Endothelial cell of umbilical vein (primary cell): ENCODE measurements at regions of chr7 and their contacts with region 1.

Region 1: GRCh38 chr7:151244196-151244840 is 4.2 kb downstream of the SMARCD3 start:
- DNase-seq: peak; percentile 61
- H3K4me3 ChIP-seq: no peak overlapping the region
- H3K27ac ChIP-seq: no peak overlapping the region
- H3K4me1 ChIP-seq: peaks cover 15% of the 10 kb centered on the region
- H3K27me3 ChIP-seq: peaks cover 0 to 6% of the 10 kb centered on the region in 2 experiments
- CTCF ChIP-seq: peak; percentile 87 to 94
- POLR2A ChIP-seq: no peak

Region 2: DNA sequence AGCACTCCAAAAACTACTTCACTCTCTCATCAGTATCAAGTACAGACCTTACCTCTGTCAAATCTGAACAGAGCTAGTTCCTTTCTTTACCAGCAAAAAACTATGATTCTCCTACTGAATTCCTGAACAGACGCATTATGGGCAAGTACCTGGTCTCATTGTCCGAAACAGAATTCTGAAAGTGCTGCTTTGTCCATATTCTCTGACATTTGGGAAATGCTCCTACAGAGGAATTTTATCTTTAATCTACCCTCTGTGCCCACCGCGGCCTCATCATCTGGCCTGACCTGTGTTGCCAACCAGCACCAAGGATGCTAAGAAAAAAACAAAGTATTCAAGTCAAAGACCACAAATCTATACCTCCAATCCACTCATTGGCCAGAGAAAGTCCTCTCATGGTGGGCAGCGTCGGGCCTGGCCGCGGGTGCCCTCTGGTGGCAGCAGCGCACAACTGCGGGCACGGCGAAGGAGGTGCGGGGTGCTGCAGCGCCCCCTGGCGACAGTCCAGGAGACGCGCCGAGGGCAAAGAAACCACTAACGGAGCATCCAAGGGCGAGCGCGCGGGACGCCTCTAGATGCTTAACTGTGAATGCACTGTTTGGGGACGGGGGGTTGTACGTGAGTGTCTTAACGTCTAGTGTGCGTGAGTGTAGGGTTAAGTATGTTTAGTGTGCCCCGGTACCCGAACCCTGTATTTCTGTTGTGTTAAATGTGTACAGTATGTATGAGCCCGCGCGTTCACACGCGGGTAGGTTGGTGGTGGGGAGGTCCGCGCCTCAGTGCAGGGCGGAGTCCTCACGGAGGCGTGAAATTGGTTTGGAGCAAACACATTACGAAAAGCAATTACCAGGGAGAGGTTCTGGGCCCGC is 71.8 kb before region 1 on chr7:
- CTCF ChIA-PET with region 1: interaction called, 5 read pairs
- POLR2A ChIA-PET with region 1: no interaction called
- dilution Hi-C with region 1: no loop called
- intact Hi-C with region 1: loop called (anchors 1 kb)
- DNase-seq: peak; percentile 76
- H3K4me3 ChIP-seq: no peak overlapping the region
- H3K27ac ChIP-seq: no peak overlapping the region
- H3K4me1 ChIP-seq: peaks cover 3% of the 10 kb centered on the region
- H3K27me3 ChIP-seq: peaks cover 21 to 26% of the 10 kb centered on the region in 2 experiments
- CTCF ChIP-seq: peak; percentile 100
- POLR2A ChIP-seq: no peak

Region 3: GRCh38 chr7:151226875-151227782 is 17.2 kb before region 1 on chr7 and contains the start of gene ABCF2:
- CTCF ChIA-PET with region 1: interaction called, 58 read pairs
- POLR2A ChIA-PET with region 1: interaction called, 3 read pairs
- dilution Hi-C with region 1: no loop called
- intact Hi-C with region 1: loop called (anchors 2 kb)
- DNase-seq: peak; percentile 99
- H3K4me3 ChIP-seq: peak within 1 kb of the TSS; percentile 64 to 98 (median 82)
- H3K27ac ChIP-seq: peak within 1 kb of the TSS; percentile 16
- H3K4me1 ChIP-seq: peaks cover 22% of the 10 kb centered on the region
- H3K27me3 ChIP-seq: no peaks in the 10 kb centered on the region
- CTCF ChIP-seq: no peak
- POLR2A ChIP-seq: peak; percentile 1
- total RNA-seq, gene ABCF2: 56.7 and 61.6 TPM in 2 replicates

Region 4: DNA sequence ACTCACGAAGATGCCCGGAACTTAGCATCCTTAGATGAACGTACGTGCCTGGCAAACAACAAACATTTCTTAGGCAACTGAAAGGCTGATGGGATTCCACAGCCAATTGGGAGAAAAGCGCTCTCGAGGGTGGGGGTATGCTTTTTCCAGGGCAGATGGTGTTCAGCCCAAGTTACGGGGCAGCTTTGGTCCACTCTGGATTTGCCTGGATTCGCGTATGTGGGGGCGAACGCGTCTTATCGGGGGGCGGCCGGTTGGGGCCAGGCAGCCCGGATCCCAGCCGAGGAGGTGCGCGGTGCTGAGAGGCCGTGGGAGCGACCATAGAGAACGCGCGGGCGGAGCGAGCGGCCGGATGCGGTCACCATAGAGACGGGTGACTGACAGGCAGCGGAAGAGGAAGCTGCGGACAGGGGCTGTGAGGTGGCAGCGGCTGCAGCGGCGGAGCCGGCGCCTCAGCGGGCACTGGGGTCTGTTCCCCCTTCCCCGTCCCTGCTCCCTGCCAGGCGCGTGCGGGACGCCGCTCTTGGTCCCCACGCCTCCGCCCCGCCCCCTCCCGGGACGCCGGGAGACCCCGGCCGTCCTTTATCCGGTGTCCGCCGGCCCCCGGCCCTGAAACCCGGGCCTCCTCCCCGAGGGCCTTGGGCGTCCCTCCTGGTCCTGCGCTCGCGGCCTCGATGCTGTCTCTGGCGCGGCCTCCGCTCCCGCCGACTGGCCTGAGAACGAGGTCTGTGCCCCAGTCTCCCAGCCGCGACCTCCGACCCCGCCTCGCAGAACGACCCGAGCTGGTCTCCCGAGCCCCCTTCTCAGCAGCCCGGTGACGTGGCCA is 12.0 kb before region 1 on chr7 and contains the start of gene CHPF2:
- CTCF ChIA-PET with region 1: interaction called, 58 read pairs
- POLR2A ChIA-PET with region 1: interaction called, 3 read pairs
- dilution Hi-C with region 1: no loop called
- intact Hi-C with region 1: loop called (anchors 1 kb)
- DNase-seq: peak; percentile 88
- H3K4me3 ChIP-seq: peak within 1 kb of the TSS; percentile 82 to 95 (median 83)
- H3K27ac ChIP-seq: peak within 1 kb of the TSS; percentile 88
- H3K4me1 ChIP-seq: peaks cover 19% of the 10 kb centered on the region
- H3K27me3 ChIP-seq: no peaks in the 10 kb centered on the region
- CTCF ChIP-seq: no peak
- POLR2A ChIP-seq: peak; percentile 95
- total RNA-seq, gene CHPF2: 73.0 and 75.0 TPM in 2 replicates

Region 5: DNA sequence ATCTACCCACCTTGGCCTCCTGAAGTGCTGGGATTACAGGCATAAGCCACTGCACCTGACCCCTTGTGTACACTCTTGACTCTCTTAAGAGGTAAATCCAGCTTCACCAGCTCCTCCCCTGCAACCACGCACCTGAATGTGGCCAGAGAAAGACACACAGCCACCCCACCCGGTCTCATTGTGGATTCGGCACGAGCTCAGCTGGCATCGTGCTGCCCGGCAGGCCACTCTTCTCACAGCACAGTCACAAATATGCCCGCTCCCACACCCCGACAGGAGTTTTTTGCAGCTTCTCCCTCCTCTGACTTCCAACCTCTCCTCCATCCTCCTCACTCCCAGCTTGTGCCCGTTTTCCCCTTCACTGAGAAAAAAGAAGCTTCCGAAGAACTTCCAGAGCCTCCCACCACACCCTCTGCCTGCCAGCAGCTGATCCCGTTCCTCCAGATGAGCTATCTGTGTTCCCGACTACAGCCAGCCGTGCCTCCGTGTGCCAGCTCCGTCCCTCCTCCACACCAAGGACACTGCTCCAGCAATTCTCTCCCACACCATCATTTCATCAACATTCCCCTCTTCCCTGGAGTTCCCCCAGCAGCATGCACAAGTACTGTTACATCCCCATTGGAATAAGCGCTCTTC is 12.2 kb after region 1 on chr7:
- CTCF ChIA-PET with region 1: interaction called, 17 read pairs
- POLR2A ChIA-PET with region 1: no interaction called
- dilution Hi-C with region 1: no loop called
- intact Hi-C with region 1: no loop called
- DNase-seq: no peak
- H3K4me3 ChIP-seq: no peak overlapping the region
- H3K27ac ChIP-seq: no peak overlapping the region
- H3K4me1 ChIP-seq: no peaks in the 10 kb centered on the region
- H3K27me3 ChIP-seq: peaks cover 9 to 10% of the 10 kb centered on the region in 2 experiments
- CTCF ChIP-seq: no peak
- POLR2A ChIP-seq: no peak

Region 6: GRCh38 chr7:151304856-151305255 is 60.5 kb after region 1 on chr7:
- CTCF ChIA-PET with region 1: interaction called, 18 read pairs
- POLR2A ChIA-PET with region 1: no interaction called
- dilution Hi-C with region 1: no loop called
- intact Hi-C with region 1: loop called (anchors 1 kb)
- DNase-seq: no peak
- H3K4me3 ChIP-seq: peak overlapping the region in 1 of 3 experiments; percentile 20
- H3K27ac ChIP-seq: no peak overlapping the region
- H3K4me1 ChIP-seq: peaks cover 3% of the 10 kb centered on the region
- H3K27me3 ChIP-seq: peaks cover 10 to 17% of the 10 kb centered on the region in 2 experiments
- CTCF ChIP-seq: no peak
- POLR2A ChIP-seq: no peak

Region 7: GRCh38 chr7:151529842-151530241 is 285.5 kb after region 1 on chr7:
- CTCF ChIA-PET with region 1: no interaction called
- POLR2A ChIA-PET with region 1: no interaction called
- dilution Hi-C with region 1: no loop called
- intact Hi-C with region 1: no loop called
- DNase-seq: no peak
- H3K4me3 ChIP-seq: no peak overlapping the region
- H3K27ac ChIP-seq: no peak overlapping the region
- H3K4me1 ChIP-seq: no peaks in the 10 kb centered on the region
- H3K27me3 ChIP-seq: peaks cover 0 to 1% of the 10 kb centered on the region in 2 experiments
- CTCF ChIP-seq: no peak
- POLR2A ChIP-seq: no peak

Region 8: DNA sequence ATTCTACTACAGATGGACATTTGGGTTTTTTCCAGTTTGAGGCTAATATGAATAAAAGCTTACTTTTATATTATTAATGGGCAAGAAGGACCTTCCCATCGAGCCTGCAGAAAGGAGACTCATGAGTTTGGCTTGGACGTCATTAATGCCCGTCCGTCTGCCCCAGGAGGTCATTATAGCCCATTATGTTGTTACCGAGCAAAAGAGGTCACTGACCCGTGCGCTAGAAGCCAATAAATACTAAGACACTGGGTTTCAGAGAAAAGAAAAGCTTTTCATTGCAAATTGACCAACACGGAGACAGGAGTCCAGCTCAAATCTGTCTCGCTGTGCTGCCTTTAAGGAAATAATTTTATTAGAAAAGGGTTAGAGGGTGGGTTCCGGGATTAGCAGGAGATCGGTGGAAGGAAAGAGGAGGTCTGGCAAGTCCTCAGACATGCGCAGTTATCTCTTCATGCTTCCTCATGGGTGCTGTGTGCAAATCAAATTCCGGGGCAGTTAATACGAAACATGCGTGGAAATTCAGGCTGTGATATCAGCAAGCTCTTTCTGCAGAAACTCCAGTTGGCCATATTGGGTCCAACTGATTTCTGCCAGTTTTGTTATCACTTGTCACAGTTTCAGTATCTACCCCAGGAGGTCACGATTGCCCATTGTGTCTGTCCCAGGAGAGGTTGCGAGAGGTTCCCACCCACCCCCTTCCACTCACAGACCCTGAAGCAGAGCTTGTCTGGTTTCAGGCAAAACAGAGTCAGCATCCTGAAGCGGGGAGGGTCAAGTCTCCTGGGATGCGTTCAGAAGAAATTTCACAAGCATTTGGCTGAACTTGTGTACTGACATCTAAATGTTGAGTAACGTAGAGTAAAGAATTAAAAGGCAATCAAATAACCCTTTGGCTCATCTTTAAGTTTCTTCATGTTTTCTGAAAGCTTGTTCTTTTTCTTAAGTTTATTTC is 710.8 kb after region 1 on chr7:
- CTCF ChIA-PET with region 1: no interaction called
- POLR2A ChIA-PET with region 1: no interaction called
- dilution Hi-C with region 1: no loop called
- intact Hi-C with region 1: no loop called
- DNase-seq: no peak
- H3K4me3 ChIP-seq: no peak overlapping the region
- H3K27ac ChIP-seq: no peak overlapping the region
- H3K4me1 ChIP-seq: no peaks in the 10 kb centered on the region
- H3K27me3 ChIP-seq: peaks cover 0 to 5% of the 10 kb centered on the region in 2 experiments
- CTCF ChIP-seq: no peak
- POLR2A ChIP-seq: no peak